A673 (cell line): ENCODE measurements at regions of chr4 and their contacts with region 1.

Region 1: GRCh38 chr4:165343353-165344191 is 16.1 kb downstream of the MSMO1 start:
- DNase-seq: no peak
- H3K4me3 ChIP-seq: no peak overlapping the region
- H3K27ac ChIP-seq: no peak overlapping the region
- H3K4me1 ChIP-seq: no peaks in the 10 kb centered on the region
- H3K27me3 ChIP-seq: no peaks in the 10 kb centered on the region
- CTCF ChIP-seq: peak; percentile 39; the same call in 1 of the 2 replicates

Region 2: DNA sequence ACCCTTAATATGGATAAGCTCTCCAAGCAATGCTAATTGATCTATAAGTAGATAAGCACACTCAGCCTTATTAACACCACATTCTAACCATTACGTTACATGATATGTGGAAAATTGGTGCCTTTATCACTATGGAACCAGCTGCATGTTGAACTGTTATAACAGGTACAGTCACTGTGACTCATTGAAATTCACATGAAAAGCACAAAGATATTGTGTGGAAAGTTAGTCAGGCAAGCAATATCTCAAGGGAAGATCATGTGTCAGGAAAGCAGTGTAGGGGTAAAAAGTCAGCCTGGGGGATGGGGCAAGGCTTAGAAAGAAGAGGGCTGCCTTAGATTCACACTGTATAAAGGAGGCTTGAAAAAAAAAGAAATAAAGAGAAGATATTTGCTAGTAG is 903.4 kb before region 1 on chr4:
- CTCF ChIA-PET with region 1: no interaction called
- POLR2A ChIA-PET with region 1: interaction called, 12 read pairs
- intact Hi-C with region 1: no loop called
- DNase-seq: no peak
- H3K4me3 ChIP-seq: no peak overlapping the region
- H3K27ac ChIP-seq: peak overlapping the region; percentile 44
- H3K4me1 ChIP-seq: peaks cover 38% of the 10 kb centered on the region
- H3K27me3 ChIP-seq: no peaks in the 10 kb centered on the region
- CTCF ChIP-seq: no peak

Region 3: DNA sequence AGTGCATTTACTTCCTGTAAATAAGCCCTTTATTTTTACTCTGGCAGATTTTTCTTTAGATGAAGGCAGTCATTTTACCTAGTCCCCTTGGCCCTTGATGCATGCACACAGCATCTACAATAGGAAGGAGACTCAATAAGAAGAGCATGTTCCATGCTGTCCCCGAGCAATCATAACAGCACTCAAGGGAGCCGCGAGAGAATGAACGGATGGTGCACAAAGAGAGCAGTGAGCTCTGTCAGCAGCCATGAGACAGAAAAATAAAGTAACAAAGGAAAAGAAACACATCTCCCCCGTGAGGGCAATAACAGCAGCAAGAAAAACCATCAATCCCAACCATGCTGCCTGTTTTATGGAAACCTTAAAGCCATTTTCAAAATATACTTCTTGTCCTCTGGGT is 577.7 kb before region 1 on chr4:
- CTCF ChIA-PET with region 1: no interaction called
- POLR2A ChIA-PET with region 1: no interaction called
- intact Hi-C with region 1: no loop called
- DNase-seq: no peak
- H3K4me3 ChIP-seq: no peak overlapping the region
- H3K27ac ChIP-seq: no peak overlapping the region
- H3K4me1 ChIP-seq: peaks cover 8% of the 10 kb centered on the region
- H3K27me3 ChIP-seq: no peaks in the 10 kb centered on the region
- CTCF ChIP-seq: no peak

Region 4: GRCh38 chr4:165668694-165669093 is 325.1 kb after region 1 on chr4:
- CTCF ChIA-PET with region 1: no interaction called
- POLR2A ChIA-PET with region 1: no interaction called
- intact Hi-C with region 1: no loop called
- DNase-seq: peak; percentile 46
- H3K4me3 ChIP-seq: no peak overlapping the region
- H3K27ac ChIP-seq: peak overlapping the region; percentile 33
- H3K4me1 ChIP-seq: peaks cover 47% of the 10 kb centered on the region
- H3K27me3 ChIP-seq: no peaks in the 10 kb centered on the region
- CTCF ChIP-seq: no peak